Heart right ventricle (tissue), 16 donors: ENCODE measurements at regions of chr18 and their contacts with region 1.

Region 1: DNA sequence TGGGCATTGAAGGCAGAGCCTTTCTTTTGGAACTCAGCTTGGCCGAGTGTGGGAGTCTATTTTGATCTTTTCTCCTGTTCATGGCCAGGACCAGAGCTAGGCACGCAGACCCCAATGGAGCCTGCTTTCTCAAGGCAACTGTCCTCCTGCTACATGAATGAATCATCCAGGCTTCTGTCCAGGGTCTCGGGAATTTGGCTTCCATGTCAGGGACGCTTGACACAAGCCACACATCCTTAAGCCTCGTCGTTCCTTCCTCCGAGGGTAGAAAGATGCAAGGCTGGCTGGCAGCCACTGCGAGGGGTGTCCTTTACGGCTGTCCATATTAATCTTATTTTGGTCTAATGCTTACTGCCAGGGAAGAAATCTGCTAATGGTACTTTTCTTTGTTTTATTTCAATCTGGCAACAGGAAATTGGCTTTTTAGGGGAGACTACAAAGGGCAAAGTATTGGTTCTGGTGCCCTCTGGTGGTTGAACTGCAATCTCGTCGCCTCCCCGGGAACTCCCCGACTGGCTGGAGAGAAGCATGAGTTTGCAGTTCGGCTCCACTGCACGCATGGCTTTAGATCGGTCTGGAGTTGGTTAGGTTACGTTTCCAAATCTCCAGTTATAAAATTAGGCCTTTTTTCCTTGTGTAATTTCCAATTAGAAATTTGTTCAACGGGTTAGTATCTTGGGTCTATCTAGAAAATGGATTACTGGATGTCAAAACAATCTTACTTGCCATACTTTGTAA is 135.2 kb downstream of the ALPK2 start:
- DNase-seq: peak; percentile 53 to 80
- ATAC-seq: peak; percentile 74 to 94 (median 90)
- H3K4me3 ChIP-seq: peak overlapping the region in 5 of 10 donors; percentile 22 to 42 (median 35)
- H3K27ac ChIP-seq: peak overlapping the region in 9 of 10 donors; percentile 13 to 70 (median 64)
- H3K4me1 ChIP-seq: peaks cover 5 to 33% (median 20%) of the 10 kb centered on the region in 9 donors
- H3K27me3 ChIP-seq: peaks cover 0 to 19% (median 0%) of the 10 kb centered on the region in 7 donors
- CTCF ChIP-seq: peak; percentile 75 to 91 (median 87)

Region 2: GRCh38 chr18:58338961-58339592 is 154.6 kb before region 1 on chr18:
- intact Hi-C with region 1: loop called in 1 of 10 experiments (anchors 10 kb)
- DNase-seq: no peak
- ATAC-seq: peak in 3 of 8 donors; percentile 11 to 58 (median 24)
- H3K4me3 ChIP-seq: no peak overlapping the region
- H3K27ac ChIP-seq: no peak overlapping the region
- H3K4me1 ChIP-seq: peaks cover 0 to 30% (median 9%) of the 10 kb centered on the region in 9 donors
- H3K27me3 ChIP-seq: no peaks in the 10 kb centered on the region
- CTCF ChIP-seq: no peak

Region 3: DNA sequence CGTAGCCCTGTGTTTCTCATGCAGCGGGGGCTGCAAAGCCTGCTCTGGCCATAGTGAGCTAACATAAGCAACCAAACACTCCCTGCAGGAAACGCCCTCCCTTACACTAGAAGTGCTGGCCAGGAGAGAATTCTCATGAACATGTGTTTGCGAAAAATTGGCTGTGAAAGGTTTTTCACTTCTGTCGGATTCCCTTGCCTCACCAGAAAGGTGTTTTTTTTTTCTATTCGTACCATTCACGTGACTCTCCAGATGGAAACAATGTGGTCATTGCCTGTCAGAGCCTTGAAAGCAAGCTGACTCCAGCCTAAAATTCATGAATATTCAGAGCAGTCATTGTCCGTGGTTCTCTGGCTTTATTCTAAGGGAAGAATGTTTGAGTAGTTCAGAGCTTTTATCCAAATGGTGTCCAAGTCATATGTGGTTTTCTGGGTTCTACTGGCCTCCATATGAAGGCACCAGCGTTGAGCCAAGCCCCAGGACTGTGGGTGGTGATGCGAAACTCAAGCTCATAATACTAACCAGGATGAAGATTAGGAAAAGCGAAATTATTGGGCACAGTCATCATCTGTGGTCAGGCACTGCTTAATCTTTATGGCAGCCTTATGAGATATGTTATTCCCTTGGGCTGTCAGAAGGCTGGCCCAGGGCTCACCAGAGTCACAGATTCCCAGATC is 101.2 kb before region 1 on chr18:
- intact Hi-C with region 1: loop called in 2 of 10 experiments (anchors 10 kb)
- DNase-seq: no peak
- ATAC-seq: peak in 6 of 8 donors; percentile 55 to 71 (median 60)
- H3K4me3 ChIP-seq: no peak overlapping the region
- H3K27ac ChIP-seq: peak overlapping the region in 3 of 10 donors; percentile 1 to 16 (median 8)
- H3K4me1 ChIP-seq: peaks cover 0 to 31% (median 4%) of the 10 kb centered on the region in 9 donors
- H3K27me3 ChIP-seq: no peaks in the 10 kb centered on the region
- CTCF ChIP-seq: no peak

Region 4: DNA sequence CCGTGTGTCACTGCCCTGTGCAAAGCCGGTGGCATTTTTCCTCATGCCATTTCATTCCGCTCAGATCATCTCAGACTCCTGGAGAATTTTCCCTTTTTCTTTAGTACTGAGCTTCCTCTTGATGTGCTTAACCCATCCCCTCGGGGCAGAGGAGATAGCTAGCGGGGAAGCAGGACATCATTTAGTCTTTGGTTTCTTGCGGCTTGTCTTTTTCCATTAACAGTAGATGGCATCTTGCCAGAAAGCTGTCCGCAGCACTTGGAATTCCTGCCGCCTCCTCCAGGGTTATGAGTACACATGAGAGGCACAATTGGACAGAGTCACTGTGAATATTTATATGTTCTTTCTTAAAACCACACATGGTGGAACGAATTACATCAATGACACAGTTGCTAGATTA is 91.4 kb before region 1 on chr18:
- intact Hi-C with region 1: loop called (anchors 1 to 10 kb)
- DNase-seq: no peak
- ATAC-seq: peak in 4 of 8 donors; percentile 13 to 71 (median 46)
- H3K4me3 ChIP-seq: no peak overlapping the region
- H3K27ac ChIP-seq: no peak overlapping the region
- H3K4me1 ChIP-seq: peaks cover 0 to 20% (median 11%) of the 10 kb centered on the region in 9 donors
- H3K27me3 ChIP-seq: no peaks in the 10 kb centered on the region
- CTCF ChIP-seq: no peak

Region 5: GRCh38 chr18:58552057-58552461 is 58.4 kb after region 1 on chr18:
- intact Hi-C with region 1: no loop called
- DNase-seq: no peak
- ATAC-seq: no peak
- H3K4me3 ChIP-seq: no peak overlapping the region
- H3K27ac ChIP-seq: peak overlapping the region in 7 of 10 donors; percentile 11 to 89 (median 44)
- H3K4me1 ChIP-seq: peaks cover 0 to 37% (median 7%) of the 10 kb centered on the region in 9 donors
- H3K27me3 ChIP-seq: no peaks in the 10 kb centered on the region
- CTCF ChIP-seq: no peak

Region 6: GRCh38 chr18:58649966-58650816 is 156.5 kb after region 1 on chr18:
- intact Hi-C with region 1: no loop called
- DNase-seq: no peak
- ATAC-seq: peak in 1 of 8 donors; percentile 42
- H3K4me3 ChIP-seq: no peak overlapping the region
- H3K27ac ChIP-seq: peak overlapping the region in 1 of 10 donors; percentile 12
- H3K4me1 ChIP-seq: peaks cover 0 to 16% (median 13%) of the 10 kb centered on the region in 9 donors
- H3K27me3 ChIP-seq: no peaks in the 10 kb centered on the region
- CTCF ChIP-seq: no peak